ENCODE measurements at regions of chrX and their contacts with region 1.

Region 1: DNA sequence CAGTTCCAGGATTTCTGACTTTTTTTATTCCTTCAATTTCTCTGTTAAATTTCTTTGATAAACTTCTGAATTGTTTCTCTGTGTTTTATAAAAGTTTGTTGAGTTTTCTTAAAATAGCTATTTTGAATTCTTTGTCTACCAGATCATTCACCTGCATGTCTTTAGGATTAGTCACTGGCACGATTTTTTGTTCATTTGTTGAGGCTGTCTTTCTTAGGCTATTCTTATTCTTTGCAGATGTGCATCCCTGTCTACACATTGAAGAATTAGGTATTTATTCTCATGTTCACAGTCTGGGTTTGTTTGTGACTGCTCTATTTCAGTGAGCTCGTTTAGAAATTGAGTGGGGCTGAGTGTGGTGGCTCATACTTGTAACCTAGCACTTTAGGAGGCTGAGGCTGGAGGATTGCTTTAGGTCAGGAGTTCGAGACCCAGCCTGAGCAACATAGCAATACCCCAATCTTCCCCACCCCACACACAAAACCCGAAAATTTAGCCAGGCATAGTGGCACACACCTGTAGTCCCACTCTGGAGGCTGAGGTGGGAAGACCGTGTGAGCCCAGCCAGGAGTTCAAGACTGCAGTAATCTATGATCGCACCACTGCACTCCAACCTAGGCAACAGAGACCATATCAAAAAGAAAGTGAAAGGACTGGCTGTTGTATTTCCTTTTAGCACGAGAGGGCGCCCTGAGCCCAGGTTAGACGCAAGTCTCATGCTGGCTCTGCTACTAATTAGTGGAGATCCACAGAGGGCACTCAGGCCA is 42.0 kb downstream of the F8 start:
- DNase-seq: peak; percentile 80
- ATAC-seq: peak; percentile 94
- H3K4me3 ChIP-seq: peak overlapping the region; percentile 60
- H3K27ac ChIP-seq: no peak overlapping the region
- H3K4me1 ChIP-seq: peaks cover 6% of the 10 kb centered on the region; the same call in 1 of the 2 replicates
- H3K27me3 ChIP-seq: no peaks in the 10 kb centered on the region
- CTCF ChIP-seq: peak; percentile 84

Region 2: GRCh38 chrX:155056877-155057792 is 76.6 kb after region 1 on chrX:
- CTCF ChIA-PET with region 1: no interaction called
- POLR2A ChIA-PET with region 1: no interaction called
- intact Hi-C with region 1: loop called (anchors 1 kb)
- DNase-seq: peak; percentile 73
- ATAC-seq: peak; percentile 82
- H3K4me3 ChIP-seq: no peak overlapping the region
- H3K27ac ChIP-seq: no peak overlapping the region
- H3K4me1 ChIP-seq: no peaks in the 10 kb centered on the region
- H3K27me3 ChIP-seq: no peaks in the 10 kb centered on the region
- CTCF ChIP-seq: peak; percentile 81

Region 3: GRCh38 chrX:155086202-155086840 is 105.8 kb after region 1 on chrX:
- CTCF ChIA-PET with region 1: no interaction called
- POLR2A ChIA-PET with region 1: no interaction called
- intact Hi-C with region 1: loop called (anchors 1 kb)
- DNase-seq: peak; percentile 65
- ATAC-seq: peak; percentile 66
- H3K4me3 ChIP-seq: no peak overlapping the region
- H3K27ac ChIP-seq: no peak overlapping the region
- H3K4me1 ChIP-seq: no peaks in the 10 kb centered on the region
- H3K27me3 ChIP-seq: no peaks in the 10 kb centered on the region
- CTCF ChIP-seq: peak; percentile 70

Region 4: DNA sequence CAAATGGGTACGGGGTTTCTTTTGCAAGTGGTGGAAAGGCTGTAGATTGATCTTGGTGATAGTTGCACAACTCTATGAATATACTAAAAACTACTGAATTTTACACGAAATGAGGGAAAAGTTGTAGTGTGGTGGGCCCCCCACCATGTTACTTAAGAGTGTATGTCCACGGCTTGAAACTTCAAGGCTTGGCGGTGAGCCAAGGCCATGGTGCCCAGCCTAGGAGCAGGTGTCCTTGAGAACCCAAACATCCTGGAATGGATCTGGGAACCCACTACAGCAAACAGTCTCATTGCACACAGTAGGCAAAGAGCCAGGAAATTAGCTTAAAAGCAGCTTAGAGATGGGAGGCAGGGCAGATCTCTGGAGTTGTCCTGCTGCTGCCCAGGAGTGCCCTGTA is 153.7 kb after region 1 on chrX:
- CTCF ChIA-PET with region 1: no interaction called
- POLR2A ChIA-PET with region 1: no interaction called
- intact Hi-C with region 1: loop called (anchors 1 kb)
- DNase-seq: no peak
- ATAC-seq: no peak
- H3K4me3 ChIP-seq: no peak overlapping the region
- H3K27ac ChIP-seq: no peak overlapping the region
- H3K4me1 ChIP-seq: no peaks in the 10 kb centered on the region
- H3K27me3 ChIP-seq: no peaks in the 10 kb centered on the region
- CTCF ChIP-seq: no peak

Region 5: GRCh38 chrX:155179346-155179986 is 199.0 kb after region 1 on chrX:
- CTCF ChIA-PET with region 1: no interaction called
- POLR2A ChIA-PET with region 1: no interaction called
- intact Hi-C with region 1: loop called (anchors 10 kb)
- DNase-seq: peak; percentile 34
- ATAC-seq: peak; percentile 60
- H3K4me3 ChIP-seq: no peak overlapping the region
- H3K27ac ChIP-seq: no peak overlapping the region
- H3K4me1 ChIP-seq: no peaks in the 10 kb centered on the region
- H3K27me3 ChIP-seq: no peaks in the 10 kb centered on the region
- CTCF ChIP-seq: peak; percentile 56; the same call in 1 of the 2 replicates